ENCODE measurements at regions of chrX and their contacts with region 1.

Region 1: GRCh38 chrX:133415276-133416105 is at the start of gene GPC4:
- DNase-seq: peak; percentile 57
- ATAC-seq: peak; percentile 86
- H3K4me3 ChIP-seq: peak within 1 kb of the TSS; percentile 57 to 73
- H3K27ac ChIP-seq: peak within 1 kb of the TSS; percentile 53; the same call in 1 of the 2 replicates
- H3K4me1 ChIP-seq: peaks cover 0 to 5% of the 10 kb centered on the region in 2 experiments; a peak in 1 of 4 replicates
- H3K27me3 ChIP-seq: no peaks in the 10 kb centered on the region
- CTCF ChIP-seq: no peak
- POLR2A ChIP-seq: no peak
- RAD21 ChIP-seq: no peak
- total RNA-seq, gene GPC4: 9.7 TPM

Region 2: GRCh38 chrX:133444951-133445831 is 29.7 kb after region 1 on chrX:
- CTCF ChIA-PET with region 1: no interaction called
- POLR2A ChIA-PET with region 1: interaction called, 10 read pairs
- RAD21 ChIA-PET with region 1: interaction called in 1 of 2 experiments, 4 read pairs
- intact Hi-C with region 1: loop called (anchors 1 kb)
- DNase-seq: peak; percentile 31
- ATAC-seq: peak; percentile 87
- H3K4me3 ChIP-seq: peak overlapping the region; percentile 40 to 60
- H3K27ac ChIP-seq: 0 out of 2 replicates have a peak overlapping the region, but pooled peaks have one; percentile 27
- H3K4me1 ChIP-seq: peaks cover 0 to 5% of the 10 kb centered on the region in 2 experiments; a peak in 2 of 4 replicates
- H3K27me3 ChIP-seq: no peaks in the 10 kb centered on the region
- CTCF ChIP-seq: no peak
- POLR2A ChIP-seq: no peak
- RAD21 ChIP-seq: no peak

Region 3: GRCh38 chrX:133638285-133638684 is 222.8 kb after region 1 on chrX:
- CTCF ChIA-PET with region 1: no interaction called
- POLR2A ChIA-PET with region 1: no interaction called
- RAD21 ChIA-PET with region 1: no interaction called
- intact Hi-C with region 1: no loop called
- DNase-seq: no peak
- ATAC-seq: no peak
- H3K4me3 ChIP-seq: no peak overlapping the region
- H3K27ac ChIP-seq: no peak overlapping the region
- H3K4me1 ChIP-seq: no peaks in the 10 kb centered on the region
- H3K27me3 ChIP-seq: no peaks in the 10 kb centered on the region
- CTCF ChIP-seq: no peak
- POLR2A ChIP-seq: no peak
- RAD21 ChIP-seq: no peak

Measured in HCT116 (cell line).